Activated T-helper 2 cell treated with anti-CD3 and anti-CD28 coated beads, Interferon-gamma antibody, Interleukin-2, Interleukin-4, amounts not matched to agents 10 μg/mL and 5 μg/mL and 100 μg/mL, durations not matched to agents 14 hours and 24 hours and 36 hours (primary cell): ENCODE measurements at regions of chr16 and their contacts with region 1.

Region 1: GRCh38 chr16:15509593-15510535 is 75.5 kb downstream of the BMERB1 start:
- DNase-seq: peak; percentile 22
- H3K4me3 Mint-ChIP-seq: no peak overlapping the region
- H3K27ac Mint-ChIP-seq: peak overlapping the region; percentile 80
- H3K4me1 Mint-ChIP-seq: peaks cover 35% of the 10 kb centered on the region
- H3K27me3 Mint-ChIP-seq: peaks cover 4% of the 10 kb centered on the region

Region 2: GRCh38 chr16:15482068-15482747 is 27.7 kb before region 1 on chr16:
- intact Hi-C with region 1: loop called (anchors 1 kb)
- DNase-seq: no peak
- H3K4me3 Mint-ChIP-seq: no peak overlapping the region
- H3K27ac Mint-ChIP-seq: peak overlapping the region; percentile 44
- H3K4me1 Mint-ChIP-seq: peaks cover 27% of the 10 kb centered on the region
- H3K27me3 Mint-ChIP-seq: no peaks in the 10 kb centered on the region

Region 3: GRCh38 chr16:15536843-15537242 is 27.0 kb after region 1 on chr16:
- intact Hi-C with region 1: no loop called
- DNase-seq: no peak
- H3K4me3 Mint-ChIP-seq: no peak overlapping the region
- H3K27ac Mint-ChIP-seq: no peak overlapping the region
- H3K4me1 Mint-ChIP-seq: no peaks in the 10 kb centered on the region
- H3K27me3 Mint-ChIP-seq: no peaks in the 10 kb centered on the region

Region 4: DNA sequence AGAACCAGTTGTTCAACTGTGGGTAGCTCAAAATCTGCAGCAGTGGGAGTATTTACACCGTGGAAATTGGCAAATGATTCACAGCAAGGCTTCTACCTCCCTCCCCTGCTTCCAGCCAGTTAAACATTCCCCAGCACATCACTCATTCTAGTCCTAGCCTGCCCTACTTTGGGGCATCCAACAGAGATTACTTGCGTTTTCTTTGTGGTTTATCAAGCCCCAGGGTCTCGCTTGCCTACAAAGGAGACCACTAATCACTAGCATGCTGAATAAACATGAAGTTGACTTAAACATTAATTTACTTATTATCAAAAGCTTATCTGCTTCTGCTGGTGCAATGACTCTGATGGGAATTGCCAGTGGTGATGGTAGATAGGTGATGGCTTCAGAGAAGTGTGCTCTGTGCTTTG is 38.6 kb after region 1 on chr16:
- intact Hi-C with region 1: no loop called
- DNase-seq: no peak
- H3K4me3 Mint-ChIP-seq: no peak overlapping the region
- H3K27ac Mint-ChIP-seq: no peak overlapping the region
- H3K4me1 Mint-ChIP-seq: peaks cover 11% of the 10 kb centered on the region
- H3K27me3 Mint-ChIP-seq: no peaks in the 10 kb centered on the region

Region 5: GRCh38 chr16:15739950-15740349 is 230.1 kb after region 1 on chr16:
- intact Hi-C with region 1: no loop called
- DNase-seq: no peak
- H3K4me3 Mint-ChIP-seq: no peak overlapping the region
- H3K27ac Mint-ChIP-seq: no peak overlapping the region
- H3K4me1 Mint-ChIP-seq: no peaks in the 10 kb centered on the region
- H3K27me3 Mint-ChIP-seq: no peaks in the 10 kb centered on the region